ENCODE measurements at regions of chr13 and their contacts with region 1.

Region 1: GRCh38 chr13:48037346-48038173 is at the start of gene NUDT15:
- DNase-seq: peak; percentile 97
- H3K4me3 Mint-ChIP-seq: peak within 1 kb of the TSS; percentile 90
- H3K27ac Mint-ChIP-seq: peak within 1 kb of the TSS; percentile 94
- H3K4me1 Mint-ChIP-seq: peaks cover 46% of the 10 kb centered on the region
- H3K27me3 Mint-ChIP-seq: no peaks in the 10 kb centered on the region
- total RNA-seq, gene NUDT15: 10.1 to 12.0 TPM

Region 2: GRCh38 chr13:48018625-48019024 is 18.9 kb before region 1 on chr13:
- CTCF ChIA-PET with region 1: interaction called, 19 read pairs
- POLR2A ChIA-PET with region 1: no interaction called
- DNase-seq: no peak
- H3K4me3 Mint-ChIP-seq: no peak overlapping the region
- H3K27ac Mint-ChIP-seq: no peak overlapping the region
- H3K4me1 Mint-ChIP-seq: no peaks in the 10 kb centered on the region
- H3K27me3 Mint-ChIP-seq: no peaks in the 10 kb centered on the region

Region 3: DNA sequence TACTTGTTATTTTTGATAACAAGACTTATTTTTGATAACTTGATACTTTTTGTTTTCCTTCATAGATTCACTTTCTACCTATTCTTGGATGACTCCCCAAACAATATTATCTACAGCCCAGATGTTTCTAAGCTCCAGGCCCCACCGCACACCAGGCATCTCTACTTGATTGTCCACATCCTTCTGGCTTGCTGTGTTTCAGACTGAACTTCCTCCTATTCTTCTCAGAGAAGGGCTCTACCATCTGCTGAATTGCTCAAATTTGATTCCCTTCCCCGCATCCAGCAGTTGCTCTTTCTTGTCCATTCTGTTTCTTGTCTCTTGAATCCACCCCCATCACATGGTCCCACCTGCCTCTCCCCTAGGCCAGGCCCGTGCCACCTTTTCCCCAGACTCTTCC is 13.0 kb after region 1 on chr13:
- CTCF ChIA-PET with region 1: interaction called, 53 read pairs
- POLR2A ChIA-PET with region 1: interaction called, 4 read pairs
- DNase-seq: no peak
- H3K4me3 Mint-ChIP-seq: no peak overlapping the region
- H3K27ac Mint-ChIP-seq: no peak overlapping the region
- H3K4me1 Mint-ChIP-seq: no peaks in the 10 kb centered on the region
- H3K27me3 Mint-ChIP-seq: no peaks in the 10 kb centered on the region

Region 4: DNA sequence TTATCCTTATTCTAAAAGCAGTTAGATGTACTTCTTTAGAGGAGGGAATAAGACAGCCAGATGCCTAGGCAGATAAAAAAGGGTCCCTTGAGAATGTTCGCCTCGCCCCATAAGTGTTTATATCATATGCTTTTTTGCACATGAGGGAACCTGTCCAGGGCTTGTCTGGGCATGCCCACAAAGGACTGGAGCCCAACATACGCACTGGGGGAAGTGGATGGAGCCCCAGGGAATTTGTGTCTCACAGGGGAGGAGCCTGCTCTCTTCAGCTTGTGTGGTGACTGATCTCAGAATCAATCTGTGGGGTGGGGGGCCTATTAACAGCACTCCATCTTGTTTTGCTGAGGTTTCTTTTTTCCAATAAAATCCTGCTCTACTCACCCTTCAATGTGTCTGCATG is 34.7 kb after region 1 on chr13:
- CTCF ChIA-PET with region 1: interaction called, 13 read pairs
- POLR2A ChIA-PET with region 1: no interaction called
- DNase-seq: no peak
- H3K4me3 Mint-ChIP-seq: no peak overlapping the region
- H3K27ac Mint-ChIP-seq: peak overlapping the region; percentile 44
- H3K4me1 Mint-ChIP-seq: peaks cover 4% of the 10 kb centered on the region
- H3K27me3 Mint-ChIP-seq: no peaks in the 10 kb centered on the region

Measured in activated CD4-positive, alpha-beta T cell treated with anti-CD3 and anti-CD28 coated beads, Interleukin-2, amount 10 ng/mL, durations not matched to agents 7 days and 5 days (primary cell).